ENCODE measurements at regions of chr22 and their contacts with region 1.

Region 1: DNA sequence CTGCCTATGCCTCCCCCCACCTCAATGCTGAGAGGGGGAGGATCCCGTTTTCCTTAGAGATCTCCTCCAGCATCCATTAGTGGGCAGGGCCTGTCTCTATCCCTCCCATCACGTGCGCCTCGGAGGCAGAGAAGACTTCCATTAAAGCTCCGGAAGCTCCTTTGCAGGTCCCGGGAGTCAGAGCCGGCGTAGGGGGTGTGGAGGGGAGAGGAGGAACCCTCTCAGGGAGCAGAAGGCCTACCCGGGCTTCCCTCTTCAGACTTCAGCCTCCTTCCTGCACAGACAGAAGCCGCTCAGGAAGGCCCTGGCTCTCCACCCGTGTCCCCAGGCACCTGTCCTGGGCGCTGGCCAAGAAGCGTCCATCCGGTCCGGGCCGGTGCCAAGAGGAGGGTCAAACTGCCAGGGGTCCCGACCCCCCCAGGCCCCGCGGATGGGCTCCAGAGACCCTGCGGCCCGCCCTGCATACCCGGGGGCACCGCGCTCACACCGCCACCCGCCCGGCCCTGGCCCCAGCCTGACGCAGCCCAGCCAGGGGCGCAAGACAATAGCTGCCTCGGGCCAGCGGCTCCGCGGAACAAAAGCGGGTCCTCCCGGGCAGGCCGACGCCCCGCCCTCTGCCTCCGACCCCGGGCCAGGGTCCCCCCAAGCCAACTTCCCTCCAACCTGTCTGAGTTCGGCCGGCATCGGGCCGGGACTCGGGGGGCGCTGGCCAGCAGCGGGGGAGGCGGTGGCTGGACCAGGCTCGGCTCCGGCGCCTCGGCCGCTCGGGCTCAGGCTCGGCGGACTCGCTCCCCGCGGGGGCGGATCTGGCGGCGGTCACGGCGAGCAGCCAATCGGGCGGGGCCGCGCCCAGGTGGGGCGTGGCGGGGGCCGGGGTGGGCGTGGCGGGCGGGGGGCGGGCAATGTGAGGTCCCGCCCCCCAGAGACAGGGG is 29.9 kb downstream of the ARVCF start:
- DNase-seq: peak; percentile 93
- H3K4me3 ChIP-seq: peak overlapping the region; percentile 77
- H3K27ac ChIP-seq: no peak overlapping the region
- H3K4me1 ChIP-seq: peaks cover 7% of the 10 kb centered on the region
- H3K27me3 ChIP-seq: no peaks in the 10 kb centered on the region

Region 2: DNA sequence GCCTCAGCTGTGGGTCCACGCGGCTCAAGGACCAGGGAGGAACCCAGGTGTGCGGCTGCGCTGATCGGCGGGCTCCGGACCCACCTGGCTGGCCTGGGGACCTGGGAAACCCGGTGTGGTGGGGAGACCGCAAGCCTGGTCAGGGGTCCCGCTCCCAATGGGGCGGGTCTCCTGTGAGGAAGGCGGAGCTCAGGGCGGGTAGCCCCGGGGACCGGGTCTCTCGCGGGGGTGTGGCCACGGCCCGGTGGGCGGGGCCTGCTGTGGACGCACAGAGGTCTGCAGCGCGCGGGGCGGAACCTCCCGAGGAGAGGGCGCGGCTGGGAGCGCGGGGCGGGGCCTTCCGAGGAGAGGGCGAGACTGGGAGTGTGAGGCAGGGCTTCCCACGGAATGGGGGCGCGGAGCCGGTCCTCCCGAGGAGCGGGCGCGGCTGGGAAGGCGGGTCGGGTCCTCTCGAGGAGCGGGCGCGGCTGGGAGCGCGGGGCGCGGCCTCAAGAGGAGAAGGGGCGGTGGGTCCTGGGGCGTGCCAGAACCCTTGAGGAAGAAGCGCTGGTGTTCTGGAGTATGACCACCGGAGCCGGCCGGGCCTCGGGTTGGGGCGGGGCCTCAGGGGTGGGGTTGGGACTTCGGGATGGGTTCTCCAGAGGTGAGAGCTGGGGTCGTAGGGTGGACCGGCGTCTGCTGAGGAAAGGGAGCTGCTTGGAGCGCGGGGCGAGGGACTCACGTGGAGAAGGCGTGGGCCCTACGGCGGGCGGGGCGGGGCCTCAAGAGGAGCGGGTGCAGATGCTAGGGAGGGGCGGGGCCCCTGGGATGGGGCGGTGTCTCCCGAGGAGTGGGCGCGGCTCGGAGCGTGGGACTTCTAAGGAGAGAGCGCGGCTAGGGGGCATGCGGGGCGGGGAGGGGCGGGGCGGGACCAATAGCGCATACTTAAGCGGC is 312.4 kb after region 1 on chr22:
- in situ Hi-C with region 1: loop called (anchors 25 kb)
- DNase-seq: peak; percentile 85
- H3K4me3 ChIP-seq: peak overlapping the region; percentile 64
- H3K27ac ChIP-seq: no peak overlapping the region
- H3K4me1 ChIP-seq: no peaks in the 10 kb centered on the region
- H3K27me3 ChIP-seq: no peaks in the 10 kb centered on the region; the same call in 1 of the 2 replicates